ENCODE measurements at regions of chr6 and their contacts with region 1.

Region 1: GRCh38 chr6:90179190-90180169 is 117.2 kb downstream of the BACH2 start:
- DNase-seq: peak in 5 of 14 experiments; percentile 16 to 67 (median 57)
- ATAC-seq: no peak
- H3K4me3 ChIP-seq: no peak overlapping the region
- H3K4me3 Mint-ChIP-seq: no peak overlapping the region
- H3K27ac ChIP-seq: no peak overlapping the region
- H3K27ac Mint-ChIP-seq: peak overlapping the region; percentile 84
- H3K4me1 ChIP-seq: peaks cover 35% of the 10 kb centered on the region
- H3K4me1 Mint-ChIP-seq: peaks cover 87% of the 10 kb centered on the region
- H3K27me3 ChIP-seq: no peaks in the 10 kb centered on the region
- H3K27me3 Mint-ChIP-seq: no peaks in the 10 kb centered on the region
- CTCF ChIP-seq: peak; percentile 75

Region 2: GRCh38 chr6:89940225-89941027 is 239.1 kb before region 1 on chr6:
- CTCF ChIA-PET with region 1: interaction called, 6 read pairs
- POLR2A ChIA-PET with region 1: no interaction called
- intact Hi-C with region 1: loop called (anchors 2 to 5 kb)
- DNase-seq: peak; percentile 47 to 87 (median 65)
- ATAC-seq: peak; percentile 95
- H3K4me3 ChIP-seq: no peak overlapping the region
- H3K4me3 Mint-ChIP-seq: no peak overlapping the region
- H3K27ac ChIP-seq: no peak overlapping the region
- H3K27ac Mint-ChIP-seq: peak overlapping the region; percentile 67
- H3K4me1 ChIP-seq: peaks cover 8% of the 10 kb centered on the region
- H3K4me1 Mint-ChIP-seq: peaks cover 41% of the 10 kb centered on the region
- H3K27me3 ChIP-seq: no peaks in the 10 kb centered on the region
- H3K27me3 Mint-ChIP-seq: no peaks in the 10 kb centered on the region
- CTCF ChIP-seq: peak; percentile 89

Region 3: DNA sequence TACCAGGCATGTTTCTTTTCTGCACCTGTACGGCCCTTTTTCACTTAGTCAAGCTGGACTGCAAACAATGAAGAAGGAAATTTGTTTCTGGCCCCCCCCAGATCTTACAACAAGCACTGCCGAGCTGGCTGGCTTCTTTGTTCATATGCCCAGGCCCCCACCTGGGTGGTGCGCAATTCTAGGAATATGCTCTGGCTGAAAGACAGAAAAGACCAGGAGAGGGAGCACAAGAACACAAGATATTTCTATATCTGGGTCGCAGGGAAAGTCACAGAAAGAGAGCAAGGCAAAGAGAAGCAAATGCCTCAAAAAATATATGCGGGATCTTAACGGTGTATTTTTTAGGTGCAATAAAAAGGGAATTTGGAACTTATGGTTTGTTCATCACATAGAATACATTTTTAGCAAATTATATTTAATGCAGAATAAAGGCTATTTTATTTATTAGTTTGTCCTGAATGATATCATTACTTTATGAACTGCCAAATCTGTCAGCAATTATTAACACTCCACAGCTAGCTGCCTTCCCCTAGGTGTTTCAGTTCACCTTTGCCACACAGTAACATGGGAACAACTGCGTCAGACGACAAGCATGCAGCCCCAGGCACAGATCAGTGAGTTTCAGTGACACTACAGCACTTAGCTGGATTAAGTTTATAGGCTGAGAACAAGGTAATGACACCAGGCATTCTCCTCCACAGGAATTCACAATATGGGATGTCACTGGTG is 208.7 kb before region 1 on chr6:
- CTCF ChIA-PET with region 1: no interaction called
- POLR2A ChIA-PET with region 1: no interaction called
- intact Hi-C with region 1: loop called in 1 of 2 experiments (anchors 5 kb)
- DNase-seq: peak in 5 of 14 experiments; percentile 13 to 65 (median 58)
- ATAC-seq: peak; percentile 77
- H3K4me3 ChIP-seq: no peak overlapping the region
- H3K4me3 Mint-ChIP-seq: no peak overlapping the region
- H3K27ac ChIP-seq: no peak overlapping the region
- H3K27ac Mint-ChIP-seq: no peak overlapping the region
- H3K4me1 ChIP-seq: peaks cover 5% of the 10 kb centered on the region
- H3K4me1 Mint-ChIP-seq: peaks cover 44% of the 10 kb centered on the region
- H3K27me3 ChIP-seq: no peaks in the 10 kb centered on the region
- H3K27me3 Mint-ChIP-seq: no peaks in the 10 kb centered on the region
- CTCF ChIP-seq: peak; percentile 49

Region 4: DNA sequence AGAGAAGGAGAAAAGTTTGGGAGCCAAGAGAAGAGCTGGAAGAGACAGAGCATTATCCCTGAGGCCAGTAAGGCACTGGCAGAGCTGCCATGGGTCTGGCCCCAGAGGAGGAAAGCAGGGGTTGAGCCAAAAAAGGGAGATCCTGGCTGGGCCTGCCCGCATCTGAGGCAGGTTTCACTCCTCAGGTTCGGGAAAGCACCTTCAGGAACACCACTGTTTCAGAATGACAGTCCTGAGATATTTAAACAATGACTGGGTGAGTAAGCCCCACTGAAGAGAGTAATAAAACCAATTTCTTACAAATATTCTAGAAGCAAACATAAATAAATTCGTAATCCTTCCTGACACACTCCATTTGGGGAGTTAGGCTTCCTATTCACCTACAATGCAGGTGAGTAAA is 35.1 kb before region 1 on chr6:
- CTCF ChIA-PET with region 1: interaction called, 3 read pairs
- POLR2A ChIA-PET with region 1: no interaction called
- intact Hi-C with region 1: loop called in 1 of 2 experiments (anchors 5 kb)
- DNase-seq: no peak
- ATAC-seq: no peak
- H3K4me3 ChIP-seq: no peak overlapping the region
- H3K4me3 Mint-ChIP-seq: no peak overlapping the region
- H3K27ac ChIP-seq: no peak overlapping the region
- H3K27ac Mint-ChIP-seq: peak overlapping the region; percentile 42
- H3K4me1 ChIP-seq: peaks cover 4% of the 10 kb centered on the region
- H3K4me1 Mint-ChIP-seq: peaks cover 83% of the 10 kb centered on the region
- H3K27me3 ChIP-seq: no peaks in the 10 kb centered on the region
- H3K27me3 Mint-ChIP-seq: no peaks in the 10 kb centered on the region
- CTCF ChIP-seq: no peak

Region 5: GRCh38 chr6:90160013-90160412 is 19.5 kb before region 1 on chr6:
- CTCF ChIA-PET with region 1: no interaction called
- POLR2A ChIA-PET with region 1: interaction called, 28 read pairs
- intact Hi-C with region 1: no loop called
- DNase-seq: no peak
- ATAC-seq: peak; percentile 25
- H3K4me3 ChIP-seq: no peak overlapping the region
- H3K4me3 Mint-ChIP-seq: peak overlapping the region; percentile 27
- H3K27ac ChIP-seq: peak overlapping the region in 1 of 2 donors; percentile 9
- H3K27ac Mint-ChIP-seq: peak overlapping the region; percentile 84
- H3K4me1 ChIP-seq: peaks cover 34% of the 10 kb centered on the region
- H3K4me1 Mint-ChIP-seq: peaks cover 75% of the 10 kb centered on the region
- H3K27me3 ChIP-seq: no peaks in the 10 kb centered on the region
- H3K27me3 Mint-ChIP-seq: no peaks in the 10 kb centered on the region
- CTCF ChIP-seq: no peak

Region 6: GRCh38 chr6:90256698-90257485 is 77.4 kb after region 1 on chr6:
- CTCF ChIA-PET with region 1: no interaction called
- POLR2A ChIA-PET with region 1: no interaction called
- intact Hi-C with region 1: no loop called
- DNase-seq: peak in 3 of 14 experiments; percentile 54 to 69 (median 64)
- ATAC-seq: peak; percentile 82
- H3K4me3 ChIP-seq: no peak overlapping the region
- H3K4me3 Mint-ChIP-seq: peak overlapping the region; percentile 1
- H3K27ac ChIP-seq: peak overlapping the region in 1 of 2 donors; percentile 16
- H3K27ac Mint-ChIP-seq: peak overlapping the region; percentile 77
- H3K4me1 ChIP-seq: peaks cover 7% of the 10 kb centered on the region
- H3K4me1 Mint-ChIP-seq: peaks cover 95% of the 10 kb centered on the region
- H3K27me3 ChIP-seq: no peaks in the 10 kb centered on the region
- H3K27me3 Mint-ChIP-seq: no peaks in the 10 kb centered on the region
- CTCF ChIP-seq: no peak

Region 7: DNA sequence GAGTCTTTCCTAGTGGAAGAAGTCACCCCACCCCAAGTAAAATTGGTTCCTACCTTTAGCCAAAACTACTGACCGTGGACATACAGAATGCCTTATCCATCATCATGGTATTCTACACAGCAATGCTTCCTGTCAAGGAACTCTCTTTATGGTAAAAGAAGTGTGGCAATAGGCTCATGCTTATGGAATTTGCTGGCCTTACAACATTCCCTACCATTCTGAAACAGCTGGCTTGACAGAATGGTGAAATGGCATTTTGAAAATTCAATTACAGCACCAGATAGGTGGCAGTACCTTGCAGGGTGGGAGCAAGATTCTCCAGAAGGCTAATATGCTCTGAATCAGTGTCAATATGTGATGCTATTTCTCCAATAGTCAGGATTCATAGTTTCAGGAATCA is 158.9 kb after region 1 on chr6:
- CTCF ChIA-PET with region 1: no interaction called
- POLR2A ChIA-PET with region 1: no interaction called
- intact Hi-C with region 1: no loop called
- DNase-seq: no peak
- ATAC-seq: no peak
- H3K4me3 ChIP-seq: no peak overlapping the region
- H3K4me3 Mint-ChIP-seq: no peak overlapping the region
- H3K27ac ChIP-seq: no peak overlapping the region
- H3K27ac Mint-ChIP-seq: no peak overlapping the region
- H3K4me1 ChIP-seq: no peaks in the 10 kb centered on the region
- H3K4me1 Mint-ChIP-seq: no peaks in the 10 kb centered on the region
- H3K27me3 ChIP-seq: no peaks in the 10 kb centered on the region
- H3K27me3 Mint-ChIP-seq: no peaks in the 10 kb centered on the region
- CTCF ChIP-seq: no peak

Region 8: GRCh38 chr6:90643381-90643780 is 463.9 kb after region 1 on chr6:
- CTCF ChIA-PET with region 1: no interaction called
- POLR2A ChIA-PET with region 1: no interaction called
- intact Hi-C with region 1: no loop called
- DNase-seq: no peak
- ATAC-seq: no peak
- H3K4me3 ChIP-seq: no peak overlapping the region
- H3K4me3 Mint-ChIP-seq: no peak overlapping the region
- H3K27ac ChIP-seq: no peak overlapping the region
- H3K27ac Mint-ChIP-seq: no peak overlapping the region
- H3K4me1 ChIP-seq: no peaks in the 10 kb centered on the region
- H3K4me1 Mint-ChIP-seq: no peaks in the 10 kb centered on the region
- H3K27me3 ChIP-seq: peaks cover 0 to 8% of the 10 kb centered on the region in 2 experiments
- H3K27me3 Mint-ChIP-seq: peaks cover 14% of the 10 kb centered on the region
- CTCF ChIP-seq: no peak

Region 9: DNA sequence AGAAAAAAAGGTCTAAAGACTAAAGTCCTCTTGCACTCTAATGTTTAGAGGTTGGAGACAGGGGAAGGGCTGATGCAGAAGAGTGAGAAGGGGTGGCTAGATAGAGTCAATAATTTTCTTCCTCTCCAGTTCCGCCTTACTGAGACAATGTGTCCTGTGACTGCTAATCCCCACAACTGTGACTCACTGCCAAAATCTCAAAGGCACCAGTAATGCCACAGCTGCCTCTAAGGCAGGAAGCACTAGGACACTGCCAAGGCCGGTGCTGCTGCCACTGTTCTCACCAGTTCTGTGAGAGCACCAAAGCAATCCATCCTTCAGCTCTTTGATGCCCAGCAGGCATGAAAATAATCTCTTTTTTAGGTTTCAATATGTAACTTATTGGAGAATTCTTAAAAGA is 1109.3 kb after region 1 on chr6:
- CTCF ChIA-PET with region 1: no interaction called
- POLR2A ChIA-PET with region 1: no interaction called
- intact Hi-C with region 1: no loop called
- DNase-seq: no peak
- ATAC-seq: no peak
- H3K4me3 ChIP-seq: no peak overlapping the region
- H3K4me3 Mint-ChIP-seq: no peak overlapping the region
- H3K27ac ChIP-seq: no peak overlapping the region
- H3K27ac Mint-ChIP-seq: no peak overlapping the region
- H3K4me1 ChIP-seq: no peaks in the 10 kb centered on the region
- H3K4me1 Mint-ChIP-seq: no peaks in the 10 kb centered on the region
- H3K27me3 ChIP-seq: no peaks in the 10 kb centered on the region
- H3K27me3 Mint-ChIP-seq: no peaks in the 10 kb centered on the region
- CTCF ChIP-seq: no peak

Measured in CD4-positive, alpha-beta T cell (primary cell).